ENCODE measurements at regions of chr17 and their contacts with region 1.

Region 1: DNA sequence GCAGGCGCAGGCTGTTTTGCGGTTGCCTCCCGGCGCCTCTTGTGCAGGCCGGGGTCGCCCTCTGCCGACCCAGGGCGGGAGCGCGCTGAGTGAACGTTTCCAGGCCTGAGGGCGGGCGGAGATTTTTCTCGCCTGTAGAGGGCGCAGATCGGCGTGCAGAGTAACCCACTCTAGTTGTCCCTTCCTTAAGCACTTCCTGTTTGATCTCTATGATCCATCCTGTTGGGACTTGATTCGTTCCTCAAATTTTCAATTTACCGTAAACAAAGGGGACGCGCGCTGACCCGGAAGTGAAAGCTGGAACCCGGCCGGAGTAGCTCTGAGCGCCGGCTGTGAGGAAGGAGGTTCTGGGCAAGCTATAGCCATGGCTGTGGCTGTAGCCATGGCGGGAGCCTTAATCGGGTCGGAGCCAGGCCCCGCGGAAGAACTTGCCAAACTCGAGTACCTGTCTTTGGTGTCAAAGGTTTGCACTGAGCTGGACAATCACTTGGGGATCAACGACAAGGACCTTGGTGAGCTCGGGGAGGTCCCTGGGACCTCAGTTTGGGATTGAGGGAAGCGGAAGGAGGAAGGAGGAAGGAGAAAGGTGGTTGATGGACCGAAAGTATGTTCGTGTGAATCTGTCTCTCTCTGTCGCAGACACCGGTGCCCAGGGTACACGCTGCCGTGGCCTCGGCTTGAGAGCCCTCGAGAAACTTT is at the start of gene DHX8:
- DNase-seq: peak; percentile 97 to 100 (median 99)
- ATAC-seq: peak; percentile 99
- H3K4me3 ChIP-seq: peak within 1 kb of the TSS; percentile 44
- H3K4me1 ChIP-seq: peaks cover 28% of the 10 kb centered on the region
- CTCF ChIP-seq: peak; percentile 99
- total RNA-seq, gene DHX8: 41.0 to 54.7 (median 46.9) TPM

Region 2: GRCh38 chr17:43393944-43394482 is 89.8 kb before region 1 on chr17:
- intact Hi-C with region 1: loop called (anchors 2 kb)
- DNase-seq: peak in 2 of 3 donors; percentile 81 to 99
- ATAC-seq: peak; percentile 64
- H3K4me3 ChIP-seq: no peak overlapping the region
- H3K4me1 ChIP-seq: peaks cover 6% of the 10 kb centered on the region
- CTCF ChIP-seq: peak; percentile 72

Measured in mucosa of descending colon (tissue), 3 donors.